ENCODE measurements at regions of chr5 and their contacts with region 1.

Region 1: GRCh38 chr5:102289251-102289899 is 6.7 kb downstream of the SLCO4C1 start:
- DNase-seq: no peak
- H3K4me3 ChIP-seq: no peak overlapping the region
- H3K27ac ChIP-seq: no peak overlapping the region
- H3K4me1 ChIP-seq: no peaks in the 10 kb centered on the region
- H3K27me3 ChIP-seq: no peaks in the 10 kb centered on the region
- CTCF ChIP-seq: no peak

Region 2: DNA sequence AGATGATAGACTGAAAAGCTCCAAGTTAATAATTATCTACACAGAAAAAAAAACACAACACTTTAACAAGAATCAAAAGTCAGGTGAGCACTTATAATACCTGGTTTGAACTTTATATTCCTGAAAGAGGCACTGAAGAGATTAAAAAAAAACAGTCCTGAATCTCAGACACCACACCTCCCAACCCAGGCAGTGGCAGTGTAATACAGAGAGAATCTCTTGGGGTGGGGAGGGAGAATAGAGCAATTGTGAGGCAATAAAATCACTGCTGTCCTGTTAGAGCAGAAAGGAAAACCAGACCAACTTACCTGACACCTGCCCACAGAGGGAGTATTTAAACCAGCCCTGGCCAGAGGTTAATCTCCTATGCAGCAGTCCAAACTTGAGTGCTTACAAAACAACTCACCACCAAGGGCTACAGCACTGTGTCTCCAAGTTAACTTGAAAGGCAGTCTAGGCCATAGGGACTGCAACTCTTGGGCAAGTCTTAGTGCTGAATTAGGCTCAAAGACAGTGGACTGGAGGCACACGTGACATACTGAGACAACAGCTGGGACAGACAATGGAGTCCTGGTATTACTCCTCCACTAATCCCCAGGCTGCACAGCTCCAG is 47.5 kb before region 1 on chr5:
- CTCF ChIA-PET with region 1: no interaction called
- dilution Hi-C with region 1: loop called (anchors 5 kb)
- in situ Hi-C with region 1: no loop called
- intact Hi-C with region 1: no loop called
- DNase-seq: no peak
- H3K4me3 ChIP-seq: no peak overlapping the region
- H3K27ac ChIP-seq: no peak overlapping the region
- H3K4me1 ChIP-seq: no peaks in the 10 kb centered on the region
- H3K27me3 ChIP-seq: no peaks in the 10 kb centered on the region
- CTCF ChIP-seq: no peak

Region 3: GRCh38 chr5:102375256-102375655 is 85.9 kb after region 1 on chr5:
- CTCF ChIA-PET with region 1: no interaction called
- dilution Hi-C with region 1: no loop called
- in situ Hi-C with region 1: no loop called
- intact Hi-C with region 1: no loop called
- DNase-seq: no peak
- H3K4me3 ChIP-seq: no peak overlapping the region
- H3K27ac ChIP-seq: no peak overlapping the region
- H3K4me1 ChIP-seq: no peaks in the 10 kb centered on the region
- H3K27me3 ChIP-seq: no peaks in the 10 kb centered on the region
- CTCF ChIP-seq: no peak

Region 4: DNA sequence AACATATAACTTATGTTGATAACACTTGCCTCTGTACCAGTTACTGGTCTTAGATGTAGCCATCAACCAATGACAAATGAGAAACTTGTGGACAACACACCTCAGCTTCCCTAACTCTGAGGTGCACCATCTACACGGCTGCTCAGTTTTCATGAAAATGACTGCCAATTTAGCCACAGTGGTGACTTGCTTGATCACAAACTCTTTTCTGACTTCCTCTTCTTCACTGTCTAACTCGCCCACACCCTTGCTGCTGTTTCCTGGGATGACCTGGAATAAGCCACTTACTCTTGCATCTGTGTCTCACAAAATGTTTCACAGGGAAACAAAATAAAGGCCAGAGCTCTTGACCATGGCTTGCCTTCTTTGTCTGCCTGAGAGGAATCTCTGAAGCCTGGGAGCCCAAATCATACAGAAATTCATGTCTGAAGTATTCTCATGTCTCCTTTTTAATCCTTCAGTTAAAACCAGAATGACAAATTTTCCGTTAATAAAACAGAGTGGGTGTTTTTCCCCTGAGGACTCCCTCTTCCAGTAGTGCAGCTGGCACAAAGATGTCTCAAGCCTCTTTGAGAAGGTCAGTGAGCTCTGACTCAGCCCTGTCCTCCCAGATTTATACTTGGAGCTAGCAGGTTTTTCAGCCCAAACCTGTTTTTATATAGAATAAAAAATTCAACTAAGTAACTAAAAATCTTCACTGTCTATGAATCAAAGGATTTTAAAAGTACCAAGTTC is 339.2 kb after region 1 on chr5:
- CTCF ChIA-PET with region 1: no interaction called
- dilution Hi-C with region 1: no loop called
- in situ Hi-C with region 1: no loop called
- intact Hi-C with region 1: no loop called
- DNase-seq: peak; percentile 72
- H3K4me3 ChIP-seq: no peak overlapping the region
- H3K27ac ChIP-seq: no peak overlapping the region
- H3K4me1 ChIP-seq: peaks cover 27% of the 10 kb centered on the region
- H3K27me3 ChIP-seq: no peaks in the 10 kb centered on the region
- CTCF ChIP-seq: no peak

Measured in mammary epithelial cell (primary cell).